ENCODE measurements at regions of chr14 and their contacts with region 1.

Region 1: GRCh38 chr14:68816262-68816942 is 23.5 kb upstream of the ZFP36L1 start:
- DNase-seq: peak; percentile 88
- H3K4me3 ChIP-seq: peak overlapping the region; percentile 36 to 38
- H3K27ac ChIP-seq: peak overlapping the region; percentile 95 to 98
- H3K4me1 ChIP-seq: peaks cover 17% of the 10 kb centered on the region
- H3K27me3 ChIP-seq: no peaks in the 10 kb centered on the region
- CTCF ChIP-seq: peak; percentile 92 to 99 (median 97)
- POLR2A ChIP-seq: peak; percentile 43

Region 2: GRCh38 chr14:67883717-67884116 is 932.7 kb before region 1 on chr14:
- intact Hi-C with region 1: loop called (anchors 5 kb)
- DNase-seq: no peak
- H3K4me3 ChIP-seq: no peak overlapping the region
- H3K27ac ChIP-seq: no peak overlapping the region
- H3K4me1 ChIP-seq: no peaks in the 10 kb centered on the region
- H3K27me3 ChIP-seq: no peaks in the 10 kb centered on the region
- CTCF ChIP-seq: peak in 2 of 4 experiments; percentile 40 to 52
- POLR2A ChIP-seq: no peak

Region 3: DNA sequence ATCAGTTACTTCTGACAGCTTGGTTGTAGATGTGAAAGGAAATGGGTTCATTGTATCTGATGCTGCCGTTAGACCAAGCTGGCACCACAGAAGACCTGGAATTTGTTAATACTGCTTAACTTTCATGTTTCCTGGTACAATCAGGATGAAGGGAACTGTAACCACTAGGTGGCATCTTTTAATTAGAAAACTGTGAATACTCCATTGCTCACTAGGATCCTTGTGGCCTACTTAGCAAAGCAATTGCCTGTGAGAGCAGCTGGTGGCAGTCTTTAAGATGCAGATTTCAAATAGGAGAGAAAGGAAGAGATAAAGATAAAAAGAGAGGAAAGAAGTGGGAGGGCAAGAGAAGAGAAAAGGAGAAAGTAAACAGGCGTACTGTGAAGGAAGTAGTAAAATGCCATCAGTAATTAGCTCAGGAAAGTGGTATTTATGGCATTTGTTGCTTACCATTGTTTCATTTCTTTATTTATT is 882.4 kb before region 1 on chr14:
- intact Hi-C with region 1: loop called (anchors 2 kb)
- DNase-seq: peak; percentile 59
- H3K4me3 ChIP-seq: no peak overlapping the region
- H3K27ac ChIP-seq: peak overlapping the region; percentile 17 to 55
- H3K4me1 ChIP-seq: no peaks in the 10 kb centered on the region
- H3K27me3 ChIP-seq: no peaks in the 10 kb centered on the region
- CTCF ChIP-seq: peak; percentile 49 to 90 (median 82)
- POLR2A ChIP-seq: no peak

Region 4: DNA sequence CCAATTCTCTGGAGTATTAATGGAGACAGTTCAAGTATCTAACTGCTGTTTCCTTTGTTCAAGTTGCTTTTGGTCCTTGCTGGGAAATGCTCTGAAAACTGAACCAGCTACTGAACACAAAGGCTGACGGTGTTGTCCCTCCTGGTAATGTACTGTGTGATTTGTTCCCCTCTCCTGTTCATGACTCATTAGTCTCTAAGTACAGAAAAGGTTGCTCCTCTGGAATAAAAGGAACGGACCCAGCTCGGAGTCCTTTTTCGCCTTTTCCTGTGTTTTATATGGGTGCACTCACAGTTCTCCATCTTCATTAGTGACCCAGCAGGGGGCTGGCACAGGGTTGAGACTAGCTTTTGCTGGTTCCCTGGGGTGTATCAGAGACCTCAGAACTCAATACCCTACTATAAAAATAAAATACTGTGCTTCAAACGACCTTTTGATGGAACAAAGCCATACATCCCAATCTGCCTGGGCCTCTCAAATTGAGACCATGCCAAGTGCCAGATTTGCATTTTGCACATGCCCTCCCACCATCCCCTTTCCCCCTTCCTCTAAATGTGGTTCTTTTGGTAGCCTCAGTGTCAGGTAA is 727.2 kb before region 1 on chr14:
- intact Hi-C with region 1: loop called (anchors 5 kb)
- DNase-seq: no peak
- H3K4me3 ChIP-seq: no peak overlapping the region
- H3K27ac ChIP-seq: no peak overlapping the region
- H3K4me1 ChIP-seq: no peaks in the 10 kb centered on the region
- H3K27me3 ChIP-seq: no peaks in the 10 kb centered on the region
- CTCF ChIP-seq: no peak
- POLR2A ChIP-seq: no peak

Region 5: DNA sequence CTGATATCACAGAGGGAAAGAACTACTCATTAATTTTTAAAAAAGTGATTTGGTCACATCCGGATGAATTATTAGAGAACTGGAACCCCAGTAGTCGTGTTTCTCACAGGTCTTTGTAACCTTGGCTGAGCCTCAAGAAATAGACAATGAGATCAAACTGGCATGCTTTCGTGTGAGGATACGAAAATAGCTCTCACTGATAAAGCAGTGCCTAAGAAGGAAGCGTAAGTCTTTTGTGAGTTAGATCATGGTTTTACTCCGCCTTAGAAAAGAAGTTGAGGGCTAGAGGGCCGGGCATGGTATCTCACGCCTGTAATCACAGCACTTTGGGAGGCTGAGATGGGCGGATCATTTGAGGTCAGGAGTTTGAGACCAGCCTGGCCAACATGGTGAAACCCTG is 409.8 kb after region 1 on chr14:
- intact Hi-C with region 1: no loop called
- DNase-seq: no peak
- H3K4me3 ChIP-seq: no peak overlapping the region
- H3K27ac ChIP-seq: no peak overlapping the region
- H3K4me1 ChIP-seq: no peaks in the 10 kb centered on the region
- H3K27me3 ChIP-seq: no peaks in the 10 kb centered on the region
- CTCF ChIP-seq: no peak
- POLR2A ChIP-seq: no peak

Measured in prostate gland (tissue), 2 donors.